ENCODE measurements at regions of chr3 and their contacts with region 1.

Region 1: DNA sequence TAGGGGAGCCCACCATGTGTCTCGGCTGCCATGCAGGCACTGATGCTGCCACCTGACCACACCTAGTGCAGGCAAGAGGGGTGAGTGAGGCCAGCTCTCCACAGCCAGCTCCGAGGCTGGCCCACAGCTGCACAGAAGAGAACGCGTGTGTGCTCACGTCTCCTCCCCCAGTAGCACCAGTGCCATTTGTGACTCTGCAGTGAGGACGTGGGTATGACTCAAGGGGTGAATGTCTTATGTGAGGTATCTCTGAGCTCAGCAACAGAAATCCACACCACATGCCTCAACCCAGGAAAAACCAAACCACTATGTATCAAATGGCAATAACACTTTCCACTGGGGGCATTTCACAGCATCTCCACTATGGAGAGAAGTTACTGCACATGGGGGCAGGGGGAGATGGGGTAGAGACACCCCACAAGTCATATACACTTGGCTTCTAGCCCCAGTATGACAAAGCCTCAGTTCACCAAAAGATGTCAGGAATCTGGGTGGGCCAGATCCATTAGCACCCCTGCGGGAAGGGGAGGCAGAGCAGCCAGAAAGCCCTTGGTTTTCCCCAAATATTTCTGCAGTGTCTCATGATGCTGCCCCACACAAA is 87.6 kb downstream of the LRIG1 start:
- DNase-seq: no peak
- H3K4me3 Mint-ChIP-seq: no peak overlapping the region
- H3K27ac Mint-ChIP-seq: peak overlapping the region; percentile 45
- H3K4me1 Mint-ChIP-seq: peaks cover 17% of the 10 kb centered on the region
- H3K27me3 Mint-ChIP-seq: no peaks in the 10 kb centered on the region

Region 2: DNA sequence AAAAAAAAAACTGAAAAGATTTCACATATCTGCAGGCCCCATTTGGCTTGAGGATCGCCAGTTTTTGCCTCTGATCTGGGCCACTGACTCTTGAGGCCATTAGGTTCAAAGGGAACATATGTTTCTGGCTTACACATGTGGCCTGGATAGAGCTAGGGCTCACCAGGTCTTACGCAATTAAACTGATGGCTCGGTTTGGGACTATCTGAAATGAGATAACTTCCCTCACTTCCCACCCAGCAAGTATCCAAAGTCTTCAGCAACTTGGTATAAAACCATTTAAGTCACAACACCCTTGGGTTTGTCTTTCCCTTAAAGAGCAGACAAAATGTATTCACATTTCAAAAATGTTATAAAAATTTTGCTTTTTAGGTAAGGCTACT is 51.3 kb after region 1 on chr3:
- intact Hi-C with region 1: loop called (anchors 5 kb)
- DNase-seq: no peak
- H3K4me3 Mint-ChIP-seq: no peak overlapping the region
- H3K27ac Mint-ChIP-seq: no peak overlapping the region
- H3K4me1 Mint-ChIP-seq: peaks cover 71% of the 10 kb centered on the region
- H3K27me3 Mint-ChIP-seq: no peaks in the 10 kb centered on the region

Region 3: DNA sequence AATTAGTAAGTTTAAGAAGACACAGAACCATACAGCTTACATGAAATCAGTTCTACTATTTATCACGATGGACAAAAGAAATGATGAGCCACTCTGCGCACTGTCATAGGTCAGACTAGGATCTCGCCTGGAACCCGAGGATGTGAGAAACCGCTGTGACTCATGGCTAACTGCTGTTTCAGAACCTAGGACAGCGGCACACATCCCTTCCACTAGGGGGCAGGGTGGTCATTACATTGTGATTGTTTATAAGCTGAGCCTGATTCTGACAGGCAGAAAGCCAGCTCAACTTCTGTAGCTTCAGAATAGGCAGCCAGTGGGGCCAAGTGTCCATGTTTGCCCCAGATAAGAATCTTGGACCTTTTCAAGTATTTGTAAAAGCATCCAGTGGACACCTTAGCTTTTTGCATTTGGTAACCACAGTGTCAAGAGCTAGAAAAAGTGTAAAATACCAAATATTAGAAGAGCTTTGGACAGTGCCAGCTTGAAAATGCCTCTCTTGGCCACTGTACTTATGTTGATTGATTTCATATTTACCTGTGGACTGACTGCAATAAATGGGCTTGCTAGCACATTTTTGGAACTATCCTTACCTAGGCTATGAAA is 700.7 kb after region 1 on chr3:
- intact Hi-C with region 1: no loop called
- DNase-seq: peak; percentile 68
- H3K4me3 Mint-ChIP-seq: no peak overlapping the region
- H3K27ac Mint-ChIP-seq: no peak overlapping the region
- H3K4me1 Mint-ChIP-seq: peaks cover 5% of the 10 kb centered on the region
- H3K27me3 Mint-ChIP-seq: peaks cover 2% of the 10 kb centered on the region

Measured in activated T-helper 2 cell treated with anti-CD3 and anti-CD28 coated beads, Interferon-gamma antibody, Interleukin-2, Interleukin-4, amounts not matched to agents 10 μg/mL and 5 μg/mL and 100 μg/mL, durations not matched to agents 14 hours and 24 hours and 36 hours (primary cell).